ENCODE measurements at regions of chr9 and their contacts with region 1.

Region 1: GRCh38 chr9:127224178-127224882 is 40.2 kb upstream of the GARNL3 start:
- DNase-seq: peak; percentile 91 to 93
- ATAC-seq: peak; percentile 86 to 93 (median 90)
- H3K4me3 ChIP-seq: peak overlapping the region in 9 of 10 donors; percentile 34 to 89 (median 65)
- H3K27ac ChIP-seq: peak overlapping the region in 9 of 10 donors; percentile 72 to 87 (median 80)
- H3K4me1 ChIP-seq: peaks cover 0 to 26% (median 19%) of the 10 kb centered on the region in 9 donors
- H3K27me3 ChIP-seq: peaks cover 0 to 8% (median 0%) of the 10 kb centered on the region in 7 donors
- CTCF ChIP-seq: peak in 7 of 9 donors; percentile 11 to 45 (median 33)

Region 2: DNA sequence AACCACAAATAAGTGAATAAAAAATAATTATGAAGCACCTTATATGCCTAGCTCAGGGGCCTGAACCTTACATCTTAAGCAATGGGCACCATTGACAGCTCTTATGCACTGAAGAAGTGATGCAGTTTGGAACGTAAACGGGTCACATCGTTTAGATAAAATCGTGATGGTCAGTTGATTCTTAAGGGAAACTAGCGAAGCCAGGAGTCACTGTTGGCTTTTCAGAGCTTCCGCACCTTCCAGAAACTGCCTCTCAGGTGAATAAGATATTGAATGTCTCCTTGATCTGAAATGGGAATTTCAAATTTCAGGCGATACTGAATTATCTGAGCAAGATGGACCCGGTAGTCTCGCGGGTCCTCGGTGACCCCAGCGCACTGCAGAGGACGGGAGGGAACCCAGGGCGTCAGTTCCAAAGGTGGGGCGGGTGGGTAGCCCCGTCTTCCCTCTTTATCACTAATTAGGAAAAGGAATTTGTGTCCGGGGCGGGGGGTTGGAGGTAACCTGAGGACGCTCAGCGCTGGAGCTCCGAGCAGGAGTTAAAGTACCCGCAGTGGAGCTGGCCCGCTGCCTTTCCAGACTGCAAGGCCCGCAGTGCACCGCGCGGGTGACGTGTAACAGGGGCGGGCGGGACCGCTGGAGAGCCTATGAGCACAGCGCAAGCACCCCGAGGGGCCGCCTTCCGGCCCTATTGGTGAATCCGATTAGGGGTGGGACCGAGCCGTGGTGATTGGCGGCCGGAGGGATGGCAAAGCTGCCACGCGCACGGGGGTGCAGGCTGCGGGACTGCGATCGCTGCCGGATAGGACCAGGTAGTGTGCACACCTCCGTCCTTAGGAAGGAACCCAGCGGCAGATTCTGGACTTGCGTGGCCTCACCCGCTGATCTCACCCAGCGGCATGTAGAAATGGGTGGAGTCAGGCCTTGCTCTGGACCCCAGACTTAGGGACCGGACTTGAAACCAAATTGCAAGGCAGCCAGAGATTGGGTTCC is 20.6 kb after region 1 on chr9:
- intact Hi-C with region 1: loop called in 2 of 10 experiments (anchors 1 to 2 kb)
- DNase-seq: peak; percentile 97 to 98
- ATAC-seq: peak; percentile 99 to 100 (median 100)
- H3K4me3 ChIP-seq: peak overlapping the region; percentile 42 to 71 (median 60)
- H3K27ac ChIP-seq: peak overlapping the region in 9 of 10 donors; percentile 65 to 87 (median 81)
- H3K4me1 ChIP-seq: peaks cover 0 to 22% (median 8%) of the 10 kb centered on the region in 9 donors
- H3K27me3 ChIP-seq: no peaks in the 10 kb centered on the region
- CTCF ChIP-seq: peak in 1 of 9 donors; percentile 11

Region 3: DNA sequence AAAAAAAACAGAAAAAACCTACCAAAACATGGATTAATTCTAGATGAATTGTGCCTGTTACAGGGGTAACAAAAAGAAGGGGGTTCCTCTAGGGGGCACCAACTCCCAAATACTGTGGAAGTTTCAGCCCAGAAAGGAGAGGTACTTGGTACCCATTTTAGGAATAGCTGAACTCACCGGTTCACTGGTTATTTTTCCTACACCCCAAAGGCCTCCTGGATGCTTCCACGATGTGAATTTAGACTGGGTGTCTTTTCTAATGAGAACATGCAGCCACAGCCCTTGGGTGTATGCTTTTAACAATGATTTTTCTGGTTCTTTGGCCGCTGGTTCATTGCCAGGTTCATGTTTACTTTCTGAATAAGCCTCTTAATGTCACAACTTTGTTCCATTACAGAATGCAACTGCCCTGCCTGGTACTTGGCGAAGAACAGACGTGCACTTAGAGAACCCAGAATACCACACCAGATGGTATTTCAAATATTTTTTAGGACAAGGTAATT is 87.0 kb after region 1 on chr9:
- intact Hi-C with region 1: loop called in 2 of 10 experiments (anchors 5 to 10 kb)
- DNase-seq: peak in 1 of 2 donors; percentile 58
- ATAC-seq: peak in 6 of 8 donors; percentile 8 to 64 (median 57)
- H3K4me3 ChIP-seq: no peak overlapping the region
- H3K27ac ChIP-seq: peak overlapping the region; percentile 8 to 83 (median 58)
- H3K4me1 ChIP-seq: peaks cover 0 to 64% (median 36%) of the 10 kb centered on the region in 9 donors
- H3K27me3 ChIP-seq: no peaks in the 10 kb centered on the region
- CTCF ChIP-seq: peak; percentile 45 to 71 (median 61)

Region 4: GRCh38 chr9:127318651-127319167 is 94.4 kb after region 1 on chr9:
- intact Hi-C with region 1: loop called in 2 of 10 experiments (anchors 5 to 10 kb)
- DNase-seq: peak; percentile 27 to 40
- ATAC-seq: peak in 6 of 8 donors; percentile 72 to 87 (median 78)
- H3K4me3 ChIP-seq: no peak overlapping the region
- H3K27ac ChIP-seq: peak overlapping the region in 9 of 10 donors; percentile 17 to 75 (median 45)
- H3K4me1 ChIP-seq: peaks cover 0 to 68% (median 27%) of the 10 kb centered on the region in 9 donors
- H3K27me3 ChIP-seq: no peaks in the 10 kb centered on the region
- CTCF ChIP-seq: no peak

Region 5: DNA sequence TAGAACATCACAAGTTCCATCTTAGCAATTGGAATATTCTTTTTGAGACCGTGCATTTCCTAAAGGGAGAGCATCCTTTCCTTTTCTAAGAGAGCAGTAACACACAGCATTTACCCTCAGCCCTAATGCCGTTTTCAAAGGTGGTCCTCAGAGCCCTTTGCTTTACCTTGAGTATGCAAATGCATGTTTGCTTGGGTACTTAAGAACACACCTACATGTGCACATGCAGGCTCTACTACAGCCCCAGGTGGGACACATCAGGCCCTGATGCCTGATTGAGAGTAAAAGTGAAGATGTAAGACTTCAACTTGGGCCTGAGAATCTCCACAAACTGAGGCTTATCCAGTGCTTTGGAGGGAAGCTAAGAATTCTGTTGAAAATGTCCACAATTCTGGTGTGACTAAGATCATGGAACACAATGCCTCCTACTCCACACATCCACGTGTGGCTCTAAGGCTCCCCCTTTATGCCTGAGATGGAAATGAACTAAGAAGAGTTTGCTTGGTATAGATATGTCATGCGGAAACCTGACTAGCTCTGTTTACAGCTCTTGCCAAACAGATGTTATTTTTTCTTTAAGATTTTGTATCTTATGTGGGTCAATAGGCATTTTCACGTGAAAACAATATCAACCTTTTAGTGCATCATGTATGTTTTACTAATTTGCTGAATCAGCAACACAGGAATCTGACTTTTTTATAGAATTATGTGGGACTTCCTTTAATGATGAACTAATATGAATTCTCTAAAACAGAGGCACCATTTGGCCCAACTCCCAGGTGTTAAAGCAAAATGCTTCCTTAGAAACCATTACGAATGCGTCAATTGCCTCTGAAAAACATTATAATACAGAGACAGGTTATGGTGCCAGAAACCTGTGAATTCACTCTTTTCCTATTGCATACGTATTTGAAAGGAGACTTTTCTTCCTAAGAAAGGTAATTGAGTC is 123.8 kb after region 1 on chr9:
- intact Hi-C with region 1: loop called in 6 of 10 experiments (anchors 5 to 10 kb)
- DNase-seq: peak in 1 of 2 donors; percentile 24
- ATAC-seq: peak in 5 of 8 donors; percentile 49 to 78 (median 76)
- H3K4me3 ChIP-seq: no peak overlapping the region
- H3K27ac ChIP-seq: peak overlapping the region in 2 of 10 donors; percentile 38 to 51
- H3K4me1 ChIP-seq: peaks cover 0 to 68% (median 12%) of the 10 kb centered on the region in 9 donors
- H3K27me3 ChIP-seq: no peaks in the 10 kb centered on the region
- CTCF ChIP-seq: peak in 8 of 9 donors; percentile 43 to 78 (median 56)

Region 6: DNA sequence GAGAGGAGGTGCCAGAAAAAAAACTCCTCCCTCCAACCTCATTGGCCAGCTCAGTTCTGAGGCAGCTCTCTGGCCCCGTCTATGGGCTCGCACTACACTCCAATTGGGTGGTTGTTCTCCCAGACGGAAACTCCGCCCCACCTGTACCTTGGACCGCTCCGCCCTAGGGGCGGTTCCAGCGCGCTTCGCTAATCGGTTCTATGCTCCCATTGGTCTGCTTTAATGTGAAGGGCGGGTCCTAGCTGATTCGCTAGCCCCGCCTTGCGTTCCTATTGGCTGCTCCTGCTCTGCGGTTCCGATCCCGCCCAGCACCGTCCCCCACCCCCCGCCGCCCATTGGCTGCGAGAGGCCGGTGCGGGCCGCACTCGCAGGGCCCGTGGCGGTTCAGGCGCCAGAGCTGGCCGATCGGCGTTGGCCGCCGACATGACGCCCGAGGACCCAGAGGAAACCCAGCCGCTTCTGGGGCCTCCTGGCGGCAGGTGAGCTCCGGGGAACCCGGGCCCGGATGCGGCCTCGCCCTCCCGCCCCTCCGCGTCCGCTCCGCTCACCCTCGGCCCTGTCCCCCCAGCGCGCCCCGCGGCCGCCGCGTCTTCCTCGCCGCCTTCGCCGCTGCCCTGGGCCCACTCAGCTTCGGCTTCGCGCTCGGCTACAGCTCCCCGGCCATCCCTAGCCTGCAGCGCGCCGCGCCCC is 172.6 kb after region 1 on chr9 and contains the start of gene SLC2A8:
- intact Hi-C with region 1: loop called in 4 of 10 experiments (anchors 2 to 10 kb)
- DNase-seq: peak; percentile 97 to 99
- ATAC-seq: peak; percentile 96 to 99 (median 98)
- H3K4me3 ChIP-seq: peak within 1 kb of the TSS; percentile 72 to 95 (median 86)
- H3K27ac ChIP-seq: peak within 1 kb of the TSS; percentile 32 to 91 (median 88)
- H3K4me1 ChIP-seq: peaks cover 0 to 24% (median 20%) of the 10 kb centered on the region in 9 donors
- H3K27me3 ChIP-seq: no peaks in the 10 kb centered on the region
- CTCF ChIP-seq: peak in 6 of 9 donors; percentile 13 to 49 (median 24)
- total RNA-seq, gene SLC2A8: 10.0 to 26.7 (median 13.1) TPM

Region 7: GRCh38 chr9:127423934-127424675 is 199.8 kb after region 1 on chr9 and contains the start of gene ZNF79:
- intact Hi-C with region 1: loop called in 2 of 10 experiments (anchors 10 kb)
- DNase-seq: peak; percentile 93 to 95
- ATAC-seq: peak; percentile 96 to 100 (median 99)
- H3K4me3 ChIP-seq: peak within 1 kb of the TSS; percentile 67 to 100 (median 84)
- H3K27ac ChIP-seq: peak within 1 kb of the TSS; percentile 81 to 95 (median 88)
- H3K4me1 ChIP-seq: peaks cover 13 to 49% (median 36%) of the 10 kb centered on the region in 9 donors
- H3K27me3 ChIP-seq: no peaks in the 10 kb centered on the region
- CTCF ChIP-seq: peak in 1 of 9 donors; percentile 8
- total RNA-seq, gene ZNF79: 4.4 to 8.3 (median 6.4) TPM